Ovary (tissue), 10 donors: ENCODE measurements at regions of chr2 and their contacts with region 1.

Region 1: GRCh38 chr2:122980671-122981070 is 1044.4 kb upstream of the CNTNAP5 start:
- DNase-seq: no peak
- H3K4me3 ChIP-seq: no peak overlapping the region
- H3K27ac ChIP-seq: no peak overlapping the region
- H3K4me1 ChIP-seq: no peaks in the 10 kb centered on the region
- H3K27me3 ChIP-seq: no peaks in the 10 kb centered on the region
- CTCF ChIP-seq: no peak
- EP300 ChIP-seq: no peak
- POLR2A ChIP-seq: no peak

Region 2: DNA sequence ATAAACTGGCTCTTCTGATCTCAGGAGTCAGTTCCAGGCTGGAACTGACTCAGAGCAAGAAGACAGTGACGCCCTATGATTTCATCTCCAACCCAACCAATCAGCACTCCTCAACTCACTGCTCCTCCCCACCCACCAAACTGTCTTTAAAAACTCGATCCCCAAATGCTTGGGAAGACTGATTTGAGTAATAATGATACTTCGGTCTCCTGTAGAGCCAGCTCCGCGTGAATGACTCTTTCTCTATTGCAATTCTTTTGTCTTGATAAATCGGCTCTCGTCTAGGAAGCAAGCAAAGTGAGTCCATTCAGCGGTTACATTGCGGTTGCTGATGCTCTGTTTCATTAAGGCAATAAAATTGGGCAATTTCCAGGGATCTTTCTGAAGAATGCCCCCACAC is 19.1 kb after region 1 on chr2:
- intact Hi-C with region 1: loop called in 1 of 4 experiments (anchors 2 kb)
- DNase-seq: no peak
- H3K4me3 ChIP-seq: no peak overlapping the region
- H3K27ac ChIP-seq: no peak overlapping the region
- H3K4me1 ChIP-seq: no peaks in the 10 kb centered on the region
- H3K27me3 ChIP-seq: no peaks in the 10 kb centered on the region
- CTCF ChIP-seq: no peak
- EP300 ChIP-seq: no peak
- POLR2A ChIP-seq: no peak